ENCODE measurements at regions of chr6 and their contacts with region 1.

Region 1: DNA sequence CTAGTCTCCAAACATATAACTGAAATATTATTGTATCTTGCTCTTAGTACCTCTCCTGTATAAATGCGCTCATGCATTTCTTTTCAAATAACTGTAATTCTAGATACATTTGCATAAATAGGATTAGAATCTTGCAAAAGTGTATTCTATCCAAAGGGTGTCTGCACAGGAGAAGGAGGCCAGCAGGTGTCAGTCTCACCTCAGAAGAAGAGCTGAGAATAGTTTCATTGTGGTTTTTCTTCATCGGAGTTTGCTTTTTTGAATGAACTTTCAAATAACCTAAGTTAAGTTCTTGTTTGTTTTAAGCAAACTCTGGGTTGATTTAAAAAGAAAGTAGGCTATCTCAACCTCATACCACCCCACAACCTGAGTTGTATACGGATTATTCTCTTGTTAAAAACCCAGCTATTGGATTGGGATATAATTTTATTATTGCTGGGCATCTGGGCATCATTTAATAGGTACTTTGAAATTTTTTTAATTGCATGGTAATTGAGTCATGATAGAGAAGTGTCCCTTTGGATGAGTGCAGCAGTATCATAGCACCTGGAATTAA is 125.0 kb upstream of the MLIP start:
- DNase-seq: peak; percentile 72
- H3K4me3 Mint-ChIP-seq: no peak overlapping the region
- H3K27ac Mint-ChIP-seq: peak overlapping the region; percentile 20
- H3K4me1 Mint-ChIP-seq: peaks cover 34% of the 10 kb centered on the region
- H3K27me3 Mint-ChIP-seq: no peaks in the 10 kb centered on the region
- CTCF ChIP-seq: peak; percentile 90

Region 2: GRCh38 chr6:53829698-53830221 is 156.5 kb before region 1 on chr6:
- CTCF ChIA-PET with region 1: no interaction called
- POLR2A ChIA-PET with region 1: no interaction called
- intact Hi-C with region 1: no loop called
- DNase-seq: no peak
- H3K4me3 Mint-ChIP-seq: no peak overlapping the region
- H3K27ac Mint-ChIP-seq: peak overlapping the region; percentile 75
- H3K4me1 Mint-ChIP-seq: peaks cover 48% of the 10 kb centered on the region
- H3K27me3 Mint-ChIP-seq: no peaks in the 10 kb centered on the region
- CTCF ChIP-seq: no peak

Region 3: GRCh38 chr6:54267798-54268197 is 281.6 kb after region 1 on chr6:
- CTCF ChIA-PET with region 1: interaction called, 60 read pairs
- POLR2A ChIA-PET with region 1: interaction called, 4 read pairs
- intact Hi-C with region 1: loop called (anchors 1 kb)
- DNase-seq: peak; percentile 72
- H3K4me3 Mint-ChIP-seq: no peak overlapping the region
- H3K27ac Mint-ChIP-seq: no peak overlapping the region
- H3K4me1 Mint-ChIP-seq: no peaks in the 10 kb centered on the region
- H3K27me3 Mint-ChIP-seq: no peaks in the 10 kb centered on the region
- CTCF ChIP-seq: peak; percentile 54

Region 4: GRCh38 chr6:54404791-54405190 is 418.5 kb after region 1 on chr6:
- CTCF ChIA-PET with region 1: no interaction called
- POLR2A ChIA-PET with region 1: no interaction called
- intact Hi-C with region 1: no loop called
- DNase-seq: no peak
- H3K4me3 Mint-ChIP-seq: no peak overlapping the region
- H3K27ac Mint-ChIP-seq: no peak overlapping the region
- H3K4me1 Mint-ChIP-seq: no peaks in the 10 kb centered on the region
- H3K27me3 Mint-ChIP-seq: no peaks in the 10 kb centered on the region
- CTCF ChIP-seq: no peak

Region 5: GRCh38 chr6:54515013-54515412 is 528.8 kb after region 1 on chr6:
- CTCF ChIA-PET with region 1: no interaction called
- POLR2A ChIA-PET with region 1: no interaction called
- intact Hi-C with region 1: loop called (anchors 10 kb)
- DNase-seq: peak; percentile 45
- H3K4me3 Mint-ChIP-seq: no peak overlapping the region
- H3K27ac Mint-ChIP-seq: no peak overlapping the region
- H3K4me1 Mint-ChIP-seq: peaks cover 9% of the 10 kb centered on the region
- H3K27me3 Mint-ChIP-seq: no peaks in the 10 kb centered on the region
- CTCF ChIP-seq: no peak

Region 6: DNA sequence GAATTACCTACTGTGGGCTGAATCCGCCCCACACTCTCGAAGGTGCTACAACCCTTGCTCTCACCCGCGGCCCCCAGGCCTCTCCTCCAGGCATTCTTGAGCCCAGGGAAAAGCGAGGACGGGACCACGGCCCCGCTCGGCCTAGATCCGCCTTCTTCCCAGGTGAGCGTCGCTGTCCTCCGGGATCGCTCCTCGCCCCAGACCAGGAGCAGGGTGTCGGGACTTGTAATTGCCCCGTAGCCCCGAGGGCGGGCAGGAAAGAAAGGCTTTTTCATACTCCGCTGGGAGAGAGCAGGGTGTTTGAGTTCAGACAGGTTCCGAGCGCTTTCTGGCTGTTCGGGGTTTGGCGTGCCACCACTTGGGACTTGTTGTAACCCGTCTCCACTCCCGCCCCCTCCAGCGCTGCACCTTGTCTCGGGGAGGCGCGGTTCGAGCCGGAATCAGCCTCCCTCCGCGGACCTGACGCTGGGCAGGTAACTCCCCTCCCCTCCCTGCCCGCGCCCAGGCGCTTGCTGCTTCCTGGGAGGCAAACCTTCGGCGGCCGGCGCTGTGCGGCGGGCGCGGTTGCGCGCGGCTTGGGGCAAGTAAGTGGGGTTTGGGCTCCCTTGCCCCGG is 860.1 kb after region 1 on chr6 and contains the start of gene FAM83B:
- CTCF ChIA-PET with region 1: interaction called, 4 read pairs
- POLR2A ChIA-PET with region 1: no interaction called
- intact Hi-C with region 1: loop called (anchors 5 kb)
- DNase-seq: peak; percentile 94
- H3K4me3 Mint-ChIP-seq: peak within 1 kb of the TSS; percentile 88
- H3K27ac Mint-ChIP-seq: peak within 1 kb of the TSS; percentile 97
- H3K4me1 Mint-ChIP-seq: peaks cover 49% of the 10 kb centered on the region
- H3K27me3 Mint-ChIP-seq: no peaks in the 10 kb centered on the region
- CTCF ChIP-seq: no peak
- total RNA-seq, gene FAM83B: 22.3 and 25.4 TPM in 2 replicates

Region 7: GRCh38 chr6:55069132-55069781 is 1083.0 kb after region 1 on chr6:
- CTCF ChIA-PET with region 1: interaction called, 4 read pairs
- POLR2A ChIA-PET with region 1: interaction called, 3 read pairs
- intact Hi-C with region 1: loop called (anchors 1 kb)
- DNase-seq: peak; percentile 63
- H3K4me3 Mint-ChIP-seq: no peak overlapping the region
- H3K27ac Mint-ChIP-seq: no peak overlapping the region
- H3K4me1 Mint-ChIP-seq: no peaks in the 10 kb centered on the region
- H3K27me3 Mint-ChIP-seq: no peaks in the 10 kb centered on the region
- CTCF ChIP-seq: peak; percentile 65